Activated naive CD4-positive, alpha-beta T cell treated with anti-CD3 and anti-CD28 coated beads for 36 hours (primary cell): ENCODE measurements at regions of chr11 and their contacts with region 1.

Region 1: DNA sequence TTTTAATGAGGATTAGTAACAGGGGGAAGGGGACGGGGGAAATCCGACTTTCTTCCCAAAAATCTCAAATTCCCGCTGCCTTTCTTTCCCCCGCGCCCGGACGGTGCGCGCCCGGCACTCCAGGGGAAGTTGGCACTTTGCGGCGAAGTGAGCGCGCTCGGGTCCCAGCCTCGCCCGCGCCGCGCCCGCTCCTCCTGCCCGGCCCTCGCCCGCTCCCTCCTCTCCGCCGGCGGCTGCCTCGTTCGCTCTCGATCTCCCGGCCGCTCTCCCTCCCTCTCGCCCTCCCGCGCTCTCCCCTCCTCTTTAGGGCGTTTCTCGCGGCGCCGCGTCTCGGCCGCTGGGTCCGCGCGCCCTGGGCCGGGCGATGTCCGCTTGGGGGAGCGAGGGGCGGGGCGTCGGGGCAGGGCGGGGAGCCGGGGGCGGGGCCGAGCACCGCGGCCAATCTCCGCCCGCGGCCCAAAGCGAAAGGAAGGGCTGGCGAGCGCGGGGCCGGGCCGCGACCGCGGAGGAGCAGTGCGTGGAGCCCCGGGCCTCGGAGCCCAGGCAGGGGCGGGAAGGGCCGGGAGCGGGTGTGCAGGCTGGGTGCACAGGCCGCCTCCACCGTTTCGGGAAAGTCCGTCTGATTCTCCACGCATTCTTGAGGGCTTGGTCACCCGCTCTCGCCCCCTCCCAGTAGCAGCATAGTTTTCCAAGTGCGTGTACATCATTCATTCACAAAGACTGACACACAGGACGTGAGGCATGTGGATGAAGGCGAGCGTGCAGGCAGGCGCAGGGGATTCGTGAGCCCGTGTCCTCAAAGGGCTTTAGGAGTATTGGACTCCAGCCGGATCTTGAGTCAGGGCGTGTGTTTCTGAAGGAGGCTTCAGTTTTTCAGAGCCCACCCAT is 65.1 kb downstream of the ETS1 start:
- DNase-seq: peak; percentile 92
- H3K4me3 Mint-ChIP-seq: peak overlapping the region; percentile 96
- H3K27ac Mint-ChIP-seq: peak overlapping the region; percentile 97
- H3K4me1 Mint-ChIP-seq: peaks cover 42% of the 10 kb centered on the region
- H3K27me3 Mint-ChIP-seq: no peaks in the 10 kb centered on the region

Region 2: DNA sequence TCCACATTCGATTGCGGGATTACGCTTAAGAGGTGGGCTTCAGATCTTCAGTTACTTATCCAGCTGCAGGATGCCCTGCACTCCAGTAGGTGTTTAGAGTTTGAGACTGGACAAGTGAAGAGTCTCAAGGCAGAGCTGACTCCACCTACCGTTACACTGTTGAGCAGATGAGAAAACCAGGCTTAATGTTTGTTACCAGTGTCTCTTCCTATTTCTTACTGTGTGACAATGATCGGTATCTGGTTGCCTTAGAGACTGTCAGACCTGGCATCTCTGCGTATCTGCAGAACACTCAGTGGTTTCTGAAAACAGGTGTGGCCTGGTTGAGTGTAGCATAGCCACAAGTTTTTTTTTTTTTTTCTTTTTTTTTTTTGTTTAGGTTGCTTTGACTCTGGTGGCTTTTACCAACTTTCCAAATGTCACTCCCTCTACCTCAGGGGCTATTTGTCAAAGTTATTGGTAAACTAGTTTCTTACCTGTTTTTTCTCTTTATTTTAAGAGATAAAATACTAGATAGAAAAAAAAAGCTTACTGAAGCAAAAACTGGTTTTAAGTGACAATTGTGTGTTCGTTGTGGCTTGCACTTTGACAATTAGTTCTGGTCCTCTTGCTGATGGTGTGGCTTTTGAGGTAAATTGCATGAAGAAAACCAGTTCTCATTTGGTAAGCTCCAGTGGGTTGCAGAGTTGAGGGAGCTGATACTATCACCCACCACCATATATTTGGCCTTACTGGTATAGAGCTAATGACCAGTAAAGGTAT is 219.7 kb before region 1 on chr11:
- CTCF ChIA-PET with region 1: interaction called, 5 read pairs
- intact Hi-C with region 1: loop called (anchors 2 kb)
- DNase-seq: peak; percentile 79
- H3K4me3 Mint-ChIP-seq: peak overlapping the region; percentile 74
- H3K27ac Mint-ChIP-seq: peak overlapping the region; percentile 93
- H3K4me1 Mint-ChIP-seq: peaks cover 80% of the 10 kb centered on the region
- H3K27me3 Mint-ChIP-seq: no peaks in the 10 kb centered on the region

Region 3: GRCh38 chr11:128422576-128423370 is 99.5 kb before region 1 on chr11:
- CTCF ChIA-PET with region 1: no interaction called
- intact Hi-C with region 1: no loop called
- DNase-seq: peak; percentile 96
- H3K4me3 Mint-ChIP-seq: peak overlapping the region; percentile 44
- H3K27ac Mint-ChIP-seq: peak overlapping the region; percentile 75
- H3K4me1 Mint-ChIP-seq: peaks cover 63% of the 10 kb centered on the region
- H3K27me3 Mint-ChIP-seq: no peaks in the 10 kb centered on the region

Region 4: DNA sequence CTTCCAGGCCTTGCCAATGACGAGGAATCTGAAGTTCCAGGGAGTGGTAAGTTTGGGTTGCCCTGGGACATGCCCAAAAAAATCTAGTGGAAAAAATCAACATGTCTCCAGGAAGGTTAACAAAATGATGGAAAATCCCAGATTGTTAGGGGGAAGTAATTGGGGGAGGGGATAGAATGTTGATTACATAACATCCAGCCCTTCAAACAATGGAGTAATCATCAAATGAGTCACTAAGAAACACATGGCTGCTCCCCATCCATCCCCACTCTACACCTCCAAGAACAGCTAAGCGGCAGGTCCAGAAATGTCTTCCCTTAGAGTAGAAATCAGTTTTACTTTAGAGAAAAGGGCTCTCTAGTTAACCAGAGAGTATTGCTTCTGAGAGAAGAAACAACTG is 29.8 kb before region 1 on chr11:
- CTCF ChIA-PET with region 1: interaction called, 5 read pairs
- intact Hi-C with region 1: loop called (anchors 1 kb)
- DNase-seq: peak; percentile 39
- H3K4me3 Mint-ChIP-seq: peak overlapping the region; percentile 35
- H3K27ac Mint-ChIP-seq: peak overlapping the region; percentile 92
- H3K4me1 Mint-ChIP-seq: peaks cover 95% of the 10 kb centered on the region
- H3K27me3 Mint-ChIP-seq: no peaks in the 10 kb centered on the region

Region 5: DNA sequence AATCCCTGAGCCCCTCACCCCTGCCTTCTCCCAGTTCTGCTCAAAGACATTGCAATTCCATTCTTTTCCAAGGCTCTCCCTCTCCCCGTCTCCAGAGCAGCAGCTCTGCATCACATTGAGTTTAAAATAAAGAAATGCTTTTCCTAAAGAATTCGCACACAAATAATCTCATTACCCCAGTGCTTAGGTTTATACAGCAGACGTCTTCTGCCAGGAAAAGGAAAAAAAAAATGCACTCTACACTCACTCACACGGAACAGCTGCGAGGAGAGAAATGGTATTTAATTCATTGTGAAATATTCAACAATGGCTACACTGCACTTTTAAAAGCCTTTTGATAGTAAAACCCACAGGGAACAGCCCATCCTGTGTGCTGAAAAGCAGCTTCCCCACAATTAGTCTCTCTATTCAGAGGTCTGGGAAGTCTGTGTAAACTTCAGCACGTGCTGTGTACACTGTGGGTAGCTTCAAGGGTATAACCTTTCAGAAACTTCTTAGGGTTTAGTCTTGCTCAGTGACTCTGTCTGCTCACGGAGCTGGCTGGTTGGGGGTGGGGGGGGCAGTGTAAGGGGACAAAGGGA is 22.3 kb after region 1 on chr11:
- CTCF ChIA-PET with region 1: interaction called, 17 read pairs
- intact Hi-C with region 1: no loop called
- DNase-seq: peak; percentile 43
- H3K4me3 Mint-ChIP-seq: peak overlapping the region; percentile 71
- H3K27ac Mint-ChIP-seq: peak overlapping the region; percentile 63
- H3K4me1 Mint-ChIP-seq: peaks cover 62% of the 10 kb centered on the region
- H3K27me3 Mint-ChIP-seq: no peaks in the 10 kb centered on the region

Region 6: DNA sequence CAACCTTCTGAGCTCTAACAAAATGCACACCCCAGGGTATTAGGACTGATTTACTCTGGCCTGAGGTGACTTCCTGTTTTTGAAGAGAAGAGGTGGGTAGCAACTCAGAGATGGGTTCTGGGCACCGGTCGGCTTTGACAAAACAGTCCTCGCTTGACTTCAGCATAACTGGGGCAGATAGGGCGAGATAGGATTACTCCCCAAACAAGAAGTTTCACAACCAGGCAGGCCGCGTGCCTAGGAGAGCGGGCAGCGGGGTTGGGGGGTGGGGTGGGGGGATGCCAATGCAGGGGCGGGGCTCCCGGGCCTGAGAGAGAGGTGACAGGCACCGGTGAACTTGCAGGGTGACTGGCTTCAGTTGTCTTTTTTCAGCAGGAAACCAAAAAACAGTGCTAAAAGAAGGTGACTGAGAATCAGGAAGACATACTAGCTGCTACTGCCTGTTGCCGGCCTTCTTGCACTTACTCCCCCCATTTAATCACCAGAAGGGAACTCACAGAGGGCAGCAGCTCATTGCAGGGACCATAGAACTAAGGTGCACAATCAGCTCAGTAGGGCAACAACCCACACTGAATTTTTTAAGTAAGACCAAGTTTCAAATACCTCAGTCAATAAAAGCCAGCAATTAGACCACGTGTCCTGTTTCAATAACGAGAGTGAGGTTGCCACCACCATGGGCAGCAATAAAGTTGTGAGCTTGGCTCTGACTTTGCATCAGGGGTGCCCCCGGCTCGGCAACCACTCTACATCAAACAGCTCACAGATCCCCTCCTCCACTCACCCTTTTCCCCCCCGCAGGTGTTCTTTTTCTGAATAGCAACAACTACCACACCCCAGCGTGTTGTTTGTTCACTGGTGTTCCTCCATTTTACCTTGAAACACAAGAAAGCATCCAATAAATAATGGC is 102.2 kb after region 1 on chr11:
- CTCF ChIA-PET with region 1: interaction called, 86 read pairs
- intact Hi-C with region 1: no loop called
- DNase-seq: peak; percentile 79
- H3K4me3 Mint-ChIP-seq: peak overlapping the region; percentile 59
- H3K27ac Mint-ChIP-seq: peak overlapping the region; percentile 89
- H3K4me1 Mint-ChIP-seq: peaks cover 92% of the 10 kb centered on the region
- H3K27me3 Mint-ChIP-seq: no peaks in the 10 kb centered on the region

Region 7: GRCh38 chr11:128733440-128734102 is 211.3 kb after region 1 on chr11:
- CTCF ChIA-PET with region 1: no interaction called
- intact Hi-C with region 1: loop called (anchors 5 kb)
- DNase-seq: peak; percentile 58
- H3K4me3 Mint-ChIP-seq: peak overlapping the region; percentile 65
- H3K27ac Mint-ChIP-seq: peak overlapping the region; percentile 32
- H3K4me1 Mint-ChIP-seq: peaks cover 93% of the 10 kb centered on the region
- H3K27me3 Mint-ChIP-seq: no peaks in the 10 kb centered on the region